ENCODE measurements at regions of chr11 and their contacts with region 1.

Region 1: DNA sequence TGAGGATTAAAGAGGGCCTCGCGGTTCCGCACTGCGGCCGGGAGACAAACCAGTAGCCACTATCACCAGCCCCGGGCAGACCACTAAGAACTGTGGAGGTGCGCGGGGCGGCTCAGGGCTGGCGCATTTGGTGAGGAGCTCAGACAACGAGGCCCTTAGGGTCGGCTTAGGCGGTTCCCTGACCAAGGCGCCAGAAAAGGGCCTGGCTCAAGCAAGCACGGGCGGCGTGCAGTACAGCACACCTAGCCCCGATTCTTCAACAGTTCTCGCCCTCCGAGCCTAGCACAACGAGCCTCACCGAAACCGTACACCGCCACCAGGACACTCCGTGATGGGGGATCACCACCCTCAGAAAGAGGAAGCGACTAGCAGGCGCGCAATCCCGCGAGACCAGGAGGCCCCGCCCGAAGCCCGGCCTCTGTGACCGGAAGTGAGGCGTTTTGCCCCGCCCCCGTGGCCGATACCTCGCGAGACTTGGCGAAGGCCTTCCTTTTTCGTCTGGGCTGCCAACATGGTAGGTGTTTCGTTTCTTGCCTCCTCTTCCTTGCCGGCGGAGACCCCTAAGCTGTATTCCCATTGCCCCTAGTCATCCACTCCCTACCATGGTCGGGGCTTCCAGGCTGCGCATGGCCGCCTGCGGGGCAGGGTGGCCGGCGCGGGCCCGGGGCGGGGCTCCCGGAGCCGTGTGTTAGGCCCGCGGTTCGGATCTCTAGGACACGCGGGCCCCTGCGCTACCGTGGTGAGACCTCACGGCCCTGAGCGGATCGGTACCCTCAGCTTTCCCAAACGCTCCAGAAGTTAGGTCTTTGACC is at the starts of genes RPL27A and TRIM66:
- DNase-seq: peak; percentile 96 to 98 (median 98)
- H3K4me3 ChIP-seq: peak within 1 kb of the TSS; percentile 73 to 98 (median 96)
- H3K27ac ChIP-seq: peak within 1 kb of the TSS; percentile 99
- H3K4me1 ChIP-seq: peaks cover 11 to 34% (median 29%) of the 10 kb centered on the region in 4 experiments
- H3K27me3 ChIP-seq: no peaks in the 10 kb centered on the region

Region 2: DNA sequence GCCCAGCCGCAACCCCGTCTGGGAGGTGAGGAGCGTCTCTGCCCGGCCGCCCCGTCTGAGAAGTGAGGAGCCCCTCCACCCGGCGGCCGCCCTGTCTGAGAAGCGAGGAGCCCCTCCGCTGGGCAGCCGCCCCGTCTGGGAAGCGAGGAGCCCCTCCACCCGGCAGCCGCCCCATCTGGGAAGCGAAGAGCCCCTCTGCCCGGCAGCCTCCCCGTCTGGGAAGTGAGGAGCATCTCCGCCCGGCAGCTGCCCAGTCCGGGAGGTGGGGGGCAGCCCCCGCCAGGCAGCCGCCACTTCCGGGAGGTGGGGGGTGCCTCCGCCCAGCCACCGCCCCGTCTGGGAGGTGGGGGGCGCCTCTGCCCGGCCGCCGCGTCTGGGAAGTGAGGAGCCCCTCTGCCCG is 159.1 kb before region 1 on chr11:
- CTCF ChIA-PET with region 1: no interaction called
- POLR2A ChIA-PET with region 1: no interaction called
- DNase-seq: no peak
- H3K4me3 ChIP-seq: no peak overlapping the region
- H3K27ac ChIP-seq: no peak overlapping the region
- H3K4me1 ChIP-seq: no peaks in the 10 kb centered on the region
- H3K27me3 ChIP-seq: no peaks in the 10 kb centered on the region

Region 3: DNA sequence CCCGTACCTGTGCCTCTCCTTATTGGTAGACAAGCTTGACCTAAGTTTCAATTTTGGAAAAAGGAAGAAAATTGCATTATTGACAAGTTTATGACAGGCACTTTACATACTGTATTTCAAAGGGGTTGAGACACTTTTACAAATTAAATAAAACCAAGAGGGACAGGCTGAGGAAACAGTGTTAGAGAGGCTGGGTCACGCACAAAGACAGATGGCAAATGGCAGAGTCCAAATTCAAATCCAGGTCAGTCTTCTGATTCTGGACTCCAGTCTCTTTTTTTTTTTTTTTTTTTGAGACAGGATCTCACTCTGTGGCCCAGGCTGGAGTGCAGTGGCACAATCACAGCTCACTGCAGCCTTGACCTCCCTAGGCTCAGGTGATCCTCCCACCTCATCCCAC is 10.2 kb before region 1 on chr11:
- CTCF ChIA-PET with region 1: no interaction called
- POLR2A ChIA-PET with region 1: interaction called, 15 read pairs
- DNase-seq: no peak
- H3K4me3 ChIP-seq: no peak overlapping the region
- H3K27ac ChIP-seq: no peak overlapping the region
- H3K4me1 ChIP-seq: no peaks in the 10 kb centered on the region
- H3K27me3 ChIP-seq: no peaks in the 10 kb centered on the region